ENCODE measurements at regions of chr12 and their contacts with region 1.

Region 1: GRCh38 chr12:95473884-95474659 is at the start of gene METAP2:
- DNase-seq: peak; percentile 98 to 99
- ATAC-seq: peak; percentile 98 to 99 (median 99)
- H3K4me3 ChIP-seq: peak within 1 kb of the TSS; percentile 99
- H3K27ac ChIP-seq: peak within 1 kb of the TSS; percentile 100
- H3K4me1 ChIP-seq: peaks cover 30% of the 10 kb centered on the region
- H3K27me3 ChIP-seq: no peaks in the 10 kb centered on the region
- CTCF ChIP-seq: no peak
- total RNA-seq, gene METAP2: 53.2 to 80.4 (median 69.6) TPM

Region 2: GRCh38 chr12:95072900-95073697 is 401.0 kb before region 1 on chr12 and contains the start of gene NR2C1:
- intact Hi-C with region 1: loop called in 1 of 2 experiments (anchors 5 kb)
- DNase-seq: peak; percentile 94 to 97
- ATAC-seq: peak; percentile 96 to 98 (median 98)
- H3K4me3 ChIP-seq: peak within 1 kb of the TSS; percentile 99
- H3K27ac ChIP-seq: peak within 1 kb of the TSS; percentile 94
- H3K4me1 ChIP-seq: no peaks in the 10 kb centered on the region
- H3K27me3 ChIP-seq: no peaks in the 10 kb centered on the region
- CTCF ChIP-seq: no peak
- total RNA-seq, gene NR2C1: 19.9 to 32.3 (median 29.3) TPM

Region 3: DNA sequence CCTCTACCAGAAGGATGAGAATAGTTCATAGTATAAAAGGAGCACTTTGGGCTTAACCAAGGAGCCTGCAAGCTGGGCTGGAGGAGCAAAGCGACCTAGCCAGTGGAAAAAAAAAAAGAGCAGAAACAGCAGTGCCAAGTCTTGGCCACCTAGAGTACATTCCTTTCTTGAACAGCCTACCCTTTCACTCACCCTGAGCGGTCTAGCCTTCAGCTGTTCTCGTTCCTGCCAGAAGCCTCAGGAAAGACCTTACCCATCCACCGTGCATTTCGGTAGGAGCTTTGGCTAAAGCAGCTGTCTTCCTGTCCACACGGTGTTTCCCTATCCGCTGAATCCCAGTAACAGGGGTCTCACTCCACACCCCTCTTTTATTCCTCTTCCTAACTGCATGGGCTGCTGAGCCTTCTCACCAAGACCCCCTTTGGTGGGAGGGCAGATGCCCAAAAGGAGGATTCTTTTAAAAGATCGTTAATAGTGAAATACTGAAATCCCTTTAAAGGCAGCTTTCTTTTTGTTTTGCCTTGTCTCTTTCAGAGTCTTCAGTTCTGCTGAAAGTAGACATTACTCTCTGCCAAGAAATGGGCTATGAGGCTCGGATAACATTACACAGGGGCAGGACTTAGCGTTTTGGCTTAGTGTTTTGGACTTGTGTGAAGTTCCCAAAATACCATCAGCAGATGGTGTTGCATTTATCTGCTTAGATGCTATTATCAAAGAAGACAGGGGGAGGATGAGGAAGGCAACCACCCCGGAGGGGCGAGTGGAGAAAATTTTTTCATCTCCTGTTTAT is 88.6 kb before region 1 on chr12:
- intact Hi-C with region 1: loop called (anchors 5 kb)
- DNase-seq: peak; percentile 39 to 67
- ATAC-seq: peak; percentile 97 to 99 (median 98)
- H3K4me3 ChIP-seq: peak overlapping the region; percentile 60
- H3K27ac ChIP-seq: peak overlapping the region; percentile 85
- H3K4me1 ChIP-seq: peaks cover 23% of the 10 kb centered on the region
- H3K27me3 ChIP-seq: no peaks in the 10 kb centered on the region
- CTCF ChIP-seq: peak; percentile 14

Measured in psoas muscle (tissue), 8 donors.